ENCODE measurements at regions of chr10 and their contacts with region 1.

Region 1: GRCh38 chr10:13882112-13882711 is 295.4 kb downstream of the PRPF18 start:
- DNase-seq: no peak
- H3K4me3 ChIP-seq: no peak overlapping the region
- H3K27ac ChIP-seq: peak overlapping the region; percentile 49 to 67
- H3K4me1 ChIP-seq: peaks cover 3 to 26% of the 10 kb centered on the region in 2 donors
- H3K27me3 ChIP-seq: no peaks in the 10 kb centered on the region
- CTCF ChIP-seq: no peak

Region 2: GRCh38 chr10:13839430-13839990 is 42.7 kb before region 1 on chr10:
- intact Hi-C with region 1: loop called (anchors 5 kb)
- DNase-seq: peak in 1 of 2 donors; percentile 72
- H3K4me3 ChIP-seq: no peak overlapping the region
- H3K27ac ChIP-seq: peak overlapping the region; percentile 59 to 61
- H3K4me1 ChIP-seq: peaks cover 8 to 24% of the 10 kb centered on the region in 2 donors
- H3K27me3 ChIP-seq: no peaks in the 10 kb centered on the region
- CTCF ChIP-seq: no peak

Region 3: GRCh38 chr10:13924040-13924725 is 42.0 kb after region 1 on chr10:
- intact Hi-C with region 1: loop called (anchors 2 kb)
- DNase-seq: peak in 1 of 2 donors; percentile 71
- H3K4me3 ChIP-seq: no peak overlapping the region
- H3K27ac ChIP-seq: peak overlapping the region; percentile 57 to 65
- H3K4me1 ChIP-seq: peaks cover 0 to 16% of the 10 kb centered on the region in 2 donors
- H3K27me3 ChIP-seq: no peaks in the 10 kb centered on the region
- CTCF ChIP-seq: no peak

Region 4: DNA sequence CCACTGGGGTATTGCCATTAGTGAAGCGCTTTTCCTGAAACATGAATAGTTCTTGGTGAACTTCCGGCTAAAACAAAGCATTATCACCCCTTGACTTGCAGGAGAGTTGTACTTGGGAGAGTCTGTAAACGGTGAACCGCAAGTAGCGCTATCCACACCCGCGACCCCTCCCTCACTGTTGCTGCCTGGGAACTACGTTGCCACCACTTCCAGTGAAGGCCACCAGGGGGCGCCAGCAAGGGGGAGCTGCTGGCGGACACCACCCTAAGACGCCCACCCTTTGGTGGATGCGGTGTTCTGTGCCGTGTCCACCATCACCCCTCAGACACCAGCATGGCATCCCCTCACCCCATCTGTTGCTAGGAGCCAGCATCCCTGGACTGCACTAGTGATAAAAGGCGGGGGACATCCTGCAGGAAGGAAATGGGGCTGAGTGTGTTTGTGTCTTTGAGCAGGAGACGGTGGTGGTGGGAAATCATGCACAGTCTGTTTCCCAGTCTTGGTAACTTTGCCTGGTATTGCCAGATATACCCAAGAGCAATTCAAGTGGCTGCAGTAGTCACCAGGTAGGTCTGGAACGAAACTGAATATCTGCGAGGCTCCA is 150.3 kb after region 1 on chr10:
- intact Hi-C with region 1: no loop called
- DNase-seq: no peak
- H3K4me3 ChIP-seq: no peak overlapping the region
- H3K27ac ChIP-seq: no peak overlapping the region
- H3K4me1 ChIP-seq: no peaks in the 10 kb centered on the region
- H3K27me3 ChIP-seq: no peaks in the 10 kb centered on the region
- CTCF ChIP-seq: peak in 2 of 3 experiments; percentile 36 to 43